ENCODE measurements at regions of chr7 and their contacts with region 1.

Region 1: DNA sequence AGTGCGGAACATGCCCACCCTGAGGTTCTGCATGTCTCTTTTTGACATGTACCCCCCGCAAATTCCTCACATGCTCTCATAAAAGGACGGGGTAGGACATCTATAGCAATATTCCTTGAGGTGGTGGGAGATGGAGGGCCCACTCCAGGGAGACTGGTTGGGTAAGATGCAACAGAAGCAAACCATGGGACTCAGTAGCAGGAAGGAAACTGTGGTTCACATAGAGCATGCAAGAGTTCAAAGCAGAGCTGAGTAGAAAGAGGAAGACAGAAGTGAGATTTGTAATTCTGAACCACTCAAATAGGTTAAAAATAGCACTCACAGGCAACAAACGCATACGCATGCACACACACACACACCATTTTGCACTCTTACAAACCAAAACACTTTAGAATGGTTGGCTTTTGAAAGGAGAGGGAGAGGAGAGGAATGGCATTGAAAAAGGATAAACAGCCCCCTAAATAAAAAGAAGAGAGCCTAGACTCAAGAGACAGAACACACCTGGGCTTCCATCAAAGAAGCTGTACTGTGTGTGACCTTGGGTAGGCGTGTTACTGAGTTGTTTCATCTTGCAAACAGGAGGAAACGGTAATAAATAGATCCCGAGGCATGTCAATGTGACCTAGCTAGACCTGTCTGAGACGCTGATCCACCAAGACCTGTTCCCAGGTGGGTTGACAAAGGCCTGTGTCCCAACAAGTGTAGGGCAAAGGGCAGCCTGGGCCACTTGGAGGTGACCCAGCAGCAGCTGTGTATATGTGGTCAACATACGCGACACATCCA is 77.6 kb upstream of the LRRC4 start:
- DNase-seq: peak in 5 of 14 experiments; percentile 21 to 80 (median 61)
- ATAC-seq: peak; percentile 80
- H3K4me3 ChIP-seq: peak overlapping the region; percentile 17
- H3K4me3 Mint-ChIP-seq: peak overlapping the region; percentile 75
- H3K27ac ChIP-seq: peak overlapping the region; percentile 55 to 63
- H3K27ac Mint-ChIP-seq: peak overlapping the region; percentile 89
- H3K4me1 ChIP-seq: peaks cover 79% of the 10 kb centered on the region
- H3K4me1 Mint-ChIP-seq: peaks cover 85% of the 10 kb centered on the region
- H3K27me3 ChIP-seq: no peaks in the 10 kb centered on the region
- H3K27me3 Mint-ChIP-seq: no peaks in the 10 kb centered on the region
- CTCF ChIP-seq: no peak

Region 2: DNA sequence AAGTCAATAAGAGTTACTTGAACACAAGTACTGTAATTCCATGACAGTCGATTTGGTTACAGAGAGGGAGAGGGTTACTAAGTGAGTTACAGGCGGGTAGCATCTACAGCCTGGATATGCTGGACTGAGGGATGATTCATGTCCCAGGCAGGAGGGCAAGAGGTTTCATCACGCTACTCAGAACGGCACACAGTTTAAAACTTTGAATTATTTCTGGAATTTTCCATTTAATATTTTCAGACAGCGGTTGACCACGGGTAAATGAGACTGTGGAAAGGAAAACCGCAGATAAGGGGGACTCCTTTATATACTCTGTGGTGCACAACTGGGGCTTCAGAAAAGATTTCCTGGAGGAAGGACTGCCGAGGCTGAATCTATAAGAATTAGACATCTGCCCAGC is 51.9 kb before region 1 on chr7:
- CTCF ChIA-PET with region 1: no interaction called
- POLR2A ChIA-PET with region 1: interaction called, 14 read pairs
- intact Hi-C with region 1: loop called (anchors 5 kb)
- DNase-seq: no peak
- ATAC-seq: no peak
- H3K4me3 ChIP-seq: no peak overlapping the region
- H3K4me3 Mint-ChIP-seq: no peak overlapping the region
- H3K27ac ChIP-seq: no peak overlapping the region
- H3K27ac Mint-ChIP-seq: no peak overlapping the region
- H3K4me1 ChIP-seq: peaks cover 46% of the 10 kb centered on the region
- H3K4me1 Mint-ChIP-seq: peaks cover 79% of the 10 kb centered on the region
- H3K27me3 ChIP-seq: no peaks in the 10 kb centered on the region
- H3K27me3 Mint-ChIP-seq: no peaks in the 10 kb centered on the region
- CTCF ChIP-seq: no peak

Region 3: GRCh38 chr7:128123291-128124037 is 14.6 kb after region 1 on chr7:
- CTCF ChIA-PET with region 1: no interaction called
- POLR2A ChIA-PET with region 1: interaction called, 5 read pairs
- intact Hi-C with region 1: loop called in 1 of 2 experiments (anchors 2 kb)
- DNase-seq: no peak
- ATAC-seq: no peak
- H3K4me3 ChIP-seq: no peak overlapping the region
- H3K4me3 Mint-ChIP-seq: no peak overlapping the region
- H3K27ac ChIP-seq: no peak overlapping the region
- H3K27ac Mint-ChIP-seq: no peak overlapping the region
- H3K4me1 ChIP-seq: peaks cover 2% of the 10 kb centered on the region
- H3K4me1 Mint-ChIP-seq: peaks cover 12% of the 10 kb centered on the region
- H3K27me3 ChIP-seq: no peaks in the 10 kb centered on the region
- H3K27me3 Mint-ChIP-seq: no peaks in the 10 kb centered on the region
- CTCF ChIP-seq: no peak

Region 4: DNA sequence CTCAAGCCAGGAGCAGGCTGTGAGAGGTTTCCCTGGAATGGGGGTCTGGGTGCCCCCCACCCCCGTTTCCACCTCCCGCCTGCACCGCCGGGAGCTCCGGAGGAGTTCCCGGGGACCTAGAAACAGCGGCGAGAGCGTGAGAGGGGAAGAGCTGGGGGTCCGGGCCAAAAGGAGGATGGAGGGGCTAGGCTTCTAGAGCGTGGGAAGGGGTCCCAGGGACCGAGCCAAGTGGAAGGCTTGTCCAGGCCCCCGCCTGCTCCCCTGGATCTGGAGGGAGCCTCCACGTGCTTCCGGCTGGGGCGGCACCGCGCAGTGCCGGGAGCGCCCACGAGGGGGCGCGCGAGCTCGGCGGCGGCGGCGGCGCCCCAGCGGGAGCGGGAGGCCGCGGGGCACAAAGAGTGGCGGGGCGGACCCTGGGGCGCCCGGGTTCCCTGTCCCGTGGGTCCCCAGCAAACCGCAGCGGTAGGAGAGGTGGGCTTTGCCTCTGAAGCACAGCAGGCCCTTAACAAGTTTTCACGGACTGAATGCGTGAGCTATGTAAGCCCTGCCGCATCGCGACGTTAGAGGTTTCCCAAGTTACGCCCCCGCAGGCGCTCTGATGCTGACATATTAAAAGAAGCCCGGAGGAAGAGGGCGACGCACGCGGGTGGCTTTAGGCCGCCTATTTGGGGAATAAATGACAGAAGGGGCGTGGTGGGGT is 26.8 kb after region 1 on chr7:
- CTCF ChIA-PET with region 1: interaction called, 7 read pairs
- POLR2A ChIA-PET with region 1: interaction called, 31 read pairs
- intact Hi-C with region 1: no loop called
- DNase-seq: peak; percentile 26 to 79 (median 50)
- ATAC-seq: peak; percentile 93
- H3K4me3 ChIP-seq: peak overlapping the region; percentile 64
- H3K4me3 Mint-ChIP-seq: peak overlapping the region; percentile 83
- H3K27ac ChIP-seq: no peak overlapping the region
- H3K27ac Mint-ChIP-seq: no peak overlapping the region
- H3K4me1 ChIP-seq: peaks cover 22% of the 10 kb centered on the region
- H3K4me1 Mint-ChIP-seq: peaks cover 18% of the 10 kb centered on the region
- H3K27me3 ChIP-seq: peaks cover 17 to 21% of the 10 kb centered on the region in 2 experiments
- H3K27me3 Mint-ChIP-seq: peaks cover 32% of the 10 kb centered on the region
- CTCF ChIP-seq: peak; percentile 56

Region 5: DNA sequence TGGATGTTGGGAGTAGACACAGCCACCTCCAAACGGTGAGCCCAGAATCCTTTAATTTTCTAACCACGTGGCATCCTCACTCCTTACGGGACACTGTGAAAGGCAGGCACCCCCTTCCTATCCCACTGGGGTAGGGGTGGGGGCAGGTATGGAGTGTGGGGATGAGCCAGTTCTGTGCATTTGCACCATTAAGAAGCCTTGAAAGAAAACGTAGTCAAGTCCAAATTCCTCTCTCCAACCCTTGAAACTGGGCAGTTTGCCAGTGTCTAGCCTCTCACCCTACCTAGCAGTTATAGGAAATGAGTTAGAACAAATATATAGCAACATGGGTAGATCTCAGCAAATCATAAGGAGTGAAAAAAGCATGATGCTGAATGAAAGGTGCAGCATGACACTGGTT is 39.8 kb after region 1 on chr7:
- CTCF ChIA-PET with region 1: no interaction called
- POLR2A ChIA-PET with region 1: no interaction called
- intact Hi-C with region 1: no loop called
- DNase-seq: no peak
- ATAC-seq: no peak
- H3K4me3 ChIP-seq: no peak overlapping the region
- H3K4me3 Mint-ChIP-seq: no peak overlapping the region
- H3K27ac ChIP-seq: no peak overlapping the region
- H3K27ac Mint-ChIP-seq: no peak overlapping the region
- H3K4me1 ChIP-seq: no peaks in the 10 kb centered on the region
- H3K4me1 Mint-ChIP-seq: no peaks in the 10 kb centered on the region
- H3K27me3 ChIP-seq: peaks cover 0 to 8% of the 10 kb centered on the region in 2 experiments
- H3K27me3 Mint-ChIP-seq: peaks cover 35% of the 10 kb centered on the region
- CTCF ChIP-seq: no peak